CD4-positive, alpha-beta memory T cell (primary cell): ENCODE measurements at regions of chr2 and their contacts with region 1.

Region 1: DNA sequence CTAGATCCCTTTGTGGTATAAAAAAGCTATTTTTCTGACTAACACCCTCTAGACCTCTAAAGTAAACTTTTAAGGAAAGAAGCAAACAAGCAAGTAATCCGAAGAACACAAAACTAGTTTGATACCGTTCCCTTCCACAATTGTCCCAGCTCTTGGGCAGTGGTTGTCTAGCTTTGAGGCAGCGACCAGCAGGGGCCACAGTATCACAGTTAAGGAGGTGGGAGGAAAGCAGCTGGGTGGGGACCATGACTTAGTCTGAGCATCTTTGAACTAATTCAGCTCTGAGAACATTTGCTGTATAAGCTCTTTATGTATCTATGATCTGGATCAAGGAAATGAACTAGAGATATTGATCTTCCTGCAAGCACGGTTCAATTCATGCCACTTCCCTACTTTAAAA is 51.0 kb downstream of the SF3B1 start:
- DNase-seq: no peak
- H3K4me3 ChIP-seq: no peak overlapping the region
- H3K4me3 Mint-ChIP-seq: no peak overlapping the region
- H3K27ac ChIP-seq: no peak overlapping the region
- H3K27ac Mint-ChIP-seq: no peak overlapping the region
- H3K4me1 ChIP-seq: peaks cover 6% of the 10 kb centered on the region
- H3K4me1 Mint-ChIP-seq: peaks cover 14 to 17% (median 16%) of the 10 kb centered on the region in 4 donors
- H3K27me3 ChIP-seq: no peaks in the 10 kb centered on the region
- H3K27me3 Mint-ChIP-seq: peaks cover 0 to 1% of the 10 kb centered on the region in 2 donors

Region 2: GRCh38 chr2:197399887-197400540 is 16.2 kb after region 1 on chr2:
- CTCF ChIA-PET with region 1: no interaction called
- POLR2A ChIA-PET with region 1: no interaction called
- intact Hi-C with region 1: no loop called
- DNase-seq: no peak
- H3K4me3 ChIP-seq: no peak overlapping the region
- H3K4me3 Mint-ChIP-seq: no peak overlapping the region
- H3K27ac ChIP-seq: no peak overlapping the region
- H3K27ac Mint-ChIP-seq: no peak overlapping the region
- H3K4me1 ChIP-seq: no peaks in the 10 kb centered on the region
- H3K4me1 Mint-ChIP-seq: peaks cover 0 to 1% (median under 1%) of the 10 kb centered on the region in 4 donors
- H3K27me3 ChIP-seq: no peaks in the 10 kb centered on the region
- H3K27me3 Mint-ChIP-seq: no peaks in the 10 kb centered on the region

Region 3: GRCh38 chr2:197777823-197778407 is 394.1 kb after region 1 on chr2:
- CTCF ChIA-PET with region 1: no interaction called
- POLR2A ChIA-PET with region 1: no interaction called
- intact Hi-C with region 1: loop called (anchors 10 kb)
- DNase-seq: peak in 4 of 5 donors; percentile 32 to 46 (median 40)
- H3K4me3 ChIP-seq: no peak overlapping the region
- H3K4me3 Mint-ChIP-seq: no peak overlapping the region
- H3K27ac ChIP-seq: no peak overlapping the region
- H3K27ac Mint-ChIP-seq: no peak overlapping the region
- H3K4me1 ChIP-seq: no peaks in the 10 kb centered on the region
- H3K4me1 Mint-ChIP-seq: peaks cover 0 to 2% (median 0%) of the 10 kb centered on the region in 4 donors
- H3K27me3 ChIP-seq: no peaks in the 10 kb centered on the region
- H3K27me3 Mint-ChIP-seq: peaks cover 4 to 5% of the 10 kb centered on the region in 2 donors